ENCODE measurements at regions of chr19 and their contacts with region 1.

Region 1: DNA sequence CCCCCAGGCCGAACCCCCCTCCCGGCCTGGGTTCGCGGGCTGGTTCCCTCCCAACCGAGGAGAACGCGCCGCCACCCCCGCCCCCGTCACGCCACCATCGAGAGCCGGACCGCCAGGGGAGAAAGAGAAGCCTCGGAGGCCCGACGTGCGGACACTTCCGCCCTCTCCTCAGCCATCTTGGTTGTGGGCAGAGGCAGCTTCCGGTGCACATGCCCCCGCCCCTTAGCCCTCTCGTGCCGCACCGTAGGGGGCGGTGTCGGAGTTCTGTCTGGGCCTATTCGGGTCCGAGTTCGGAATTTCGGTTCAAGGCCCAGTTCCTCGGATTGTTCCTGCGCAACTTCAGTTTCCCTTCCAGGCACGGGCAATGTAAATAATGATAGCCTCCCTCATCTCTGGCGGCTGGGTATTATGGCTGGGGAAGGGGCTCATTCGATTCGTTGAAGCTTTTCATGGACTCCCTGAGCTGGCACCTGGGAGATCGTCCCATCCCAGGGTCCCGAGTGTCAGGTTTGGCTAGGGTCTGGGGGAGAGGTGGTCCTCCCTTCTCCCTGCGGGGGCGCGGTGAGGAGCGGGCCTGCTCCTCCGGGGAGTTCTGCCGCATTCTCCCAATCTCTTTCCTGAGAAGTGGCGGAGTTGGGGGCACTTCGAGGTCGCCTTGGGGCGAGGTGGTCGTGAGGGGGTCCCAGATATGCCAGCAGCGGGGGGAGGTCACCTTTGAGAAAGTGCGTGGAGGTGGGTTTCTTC is at the starts of genes IER2 and STX10:
- DNase-seq: peak; percentile 96
- H3K4me3 Mint-ChIP-seq: peak within 1 kb of the TSS; percentile 99
- H3K27ac Mint-ChIP-seq: peak within 1 kb of the TSS; percentile 97
- H3K4me1 Mint-ChIP-seq: peaks cover 23% of the 10 kb centered on the region
- H3K27me3 Mint-ChIP-seq: peaks cover 3% of the 10 kb centered on the region
- total RNA-seq, gene IER2: 129 to 137 TPM
- total RNA-seq, gene STX10: 65.5 to 66.3 TPM

Region 2: GRCh38 chr19:13099073-13099999 is 51.0 kb before region 1 on chr19:
- CTCF ChIA-PET with region 1: interaction called, 9 read pairs
- POLR2A ChIA-PET with region 1: interaction called, 8 read pairs
- intact Hi-C with region 1: loop called (anchors 1 kb)
- DNase-seq: peak; percentile 88
- H3K4me3 Mint-ChIP-seq: peak overlapping the region; percentile 64
- H3K27ac Mint-ChIP-seq: peak overlapping the region; percentile 90
- H3K4me1 Mint-ChIP-seq: peaks cover 58% of the 10 kb centered on the region
- H3K27me3 Mint-ChIP-seq: peaks cover 22% of the 10 kb centered on the region

Region 3: DNA sequence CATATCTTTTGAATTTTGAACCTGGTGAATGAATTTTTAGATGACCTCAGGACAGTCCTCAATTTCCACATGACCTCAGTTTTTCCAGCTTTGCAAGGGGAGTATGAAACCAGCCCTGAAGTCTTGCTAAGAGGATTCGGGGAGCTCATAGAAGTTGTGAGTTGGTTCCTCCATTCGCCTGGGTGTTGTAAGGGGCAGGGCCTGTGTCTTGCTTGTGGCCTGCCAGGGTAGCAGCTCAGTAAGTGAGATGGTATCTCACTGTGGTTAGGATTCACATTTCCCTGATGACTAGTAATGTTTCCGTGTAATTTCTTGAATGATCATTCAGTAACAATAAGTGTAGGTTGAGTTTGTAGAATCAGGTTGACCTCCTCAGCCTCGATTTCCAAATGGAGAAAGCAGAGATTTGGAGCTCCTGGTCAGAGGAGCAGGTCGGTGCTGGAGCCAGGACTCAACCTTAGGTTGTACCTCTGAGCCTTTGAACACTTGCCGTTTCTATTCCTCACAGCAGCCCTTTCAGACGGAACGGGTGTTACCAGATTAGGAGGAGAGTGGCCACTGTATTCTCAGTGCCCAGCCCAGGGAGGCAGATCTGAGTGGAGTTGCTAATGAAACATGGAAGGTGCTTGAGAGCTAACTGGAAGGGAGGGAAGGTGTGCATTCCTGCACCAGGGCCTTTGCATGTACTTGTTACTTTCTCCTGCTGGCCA is 17.7 kb before region 1 on chr19:
- CTCF ChIA-PET with region 1: interaction called, 11 read pairs
- POLR2A ChIA-PET with region 1: interaction called, 20 read pairs
- intact Hi-C with region 1: loop called (anchors 1 kb)
- DNase-seq: peak; percentile 83
- H3K4me3 Mint-ChIP-seq: peak overlapping the region; percentile 60
- H3K27ac Mint-ChIP-seq: peak overlapping the region; percentile 96
- H3K4me1 Mint-ChIP-seq: peaks cover 46% of the 10 kb centered on the region
- H3K27me3 Mint-ChIP-seq: no peaks in the 10 kb centered on the region

Region 4: GRCh38 chr19:13162518-13163314 is 12.4 kb after region 1 on chr19:
- CTCF ChIA-PET with region 1: interaction called, 17 read pairs
- POLR2A ChIA-PET with region 1: interaction called, 167 read pairs
- intact Hi-C with region 1: loop called (anchors 1 kb)
- DNase-seq: peak; percentile 96
- H3K4me3 Mint-ChIP-seq: peak overlapping the region; percentile 87
- H3K27ac Mint-ChIP-seq: peak overlapping the region; percentile 99
- H3K4me1 Mint-ChIP-seq: peaks cover 60% of the 10 kb centered on the region
- H3K27me3 Mint-ChIP-seq: no peaks in the 10 kb centered on the region

Region 5: GRCh38 chr19:13181747-13182388 is 31.5 kb after region 1 on chr19:
- CTCF ChIA-PET with region 1: interaction called, 4 read pairs
- POLR2A ChIA-PET with region 1: interaction called, 12 read pairs
- intact Hi-C with region 1: no loop called
- DNase-seq: peak; percentile 61
- H3K4me3 Mint-ChIP-seq: peak overlapping the region; percentile 8
- H3K27ac Mint-ChIP-seq: peak overlapping the region; percentile 60
- H3K4me1 Mint-ChIP-seq: peaks cover 25% of the 10 kb centered on the region
- H3K27me3 Mint-ChIP-seq: no peaks in the 10 kb centered on the region